K562 (cell line): ENCODE measurements at regions of chr10 and their contacts with region 1.

Region 1: DNA sequence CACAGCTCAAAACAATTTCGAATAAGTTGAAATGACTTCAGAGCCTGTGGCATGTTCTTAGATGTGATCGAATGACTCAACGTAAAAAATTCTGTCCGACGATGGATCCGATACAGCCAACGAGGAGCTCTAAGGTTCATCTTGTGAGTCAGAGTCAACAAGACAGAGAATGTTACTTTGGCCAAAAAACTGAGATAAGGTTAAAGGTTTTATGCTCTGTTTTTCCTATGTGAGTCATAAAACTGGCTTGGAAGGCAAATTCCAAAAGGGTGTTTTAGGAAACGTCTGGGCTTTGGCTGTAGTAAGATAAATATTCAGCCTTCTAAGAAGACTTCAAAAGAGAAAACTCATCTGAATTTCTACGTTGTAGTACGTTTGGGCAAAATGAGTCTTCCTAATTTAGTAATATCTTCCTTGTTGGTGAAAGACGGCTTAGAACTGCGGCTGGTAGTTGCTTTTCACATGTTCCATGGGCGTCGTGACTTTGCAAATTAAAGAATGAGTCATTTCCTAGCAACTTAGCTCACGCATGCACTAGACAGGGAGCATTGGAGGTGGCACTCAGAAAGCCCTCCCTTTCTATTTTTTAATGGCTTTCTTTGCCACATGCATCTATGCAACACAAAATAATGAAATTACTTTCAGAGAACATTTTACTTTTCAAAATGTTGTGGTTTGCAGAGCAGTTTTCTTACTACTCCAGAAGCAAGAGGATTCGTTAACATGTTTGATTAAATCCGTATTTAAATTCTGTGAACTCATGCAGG is 28.2 kb downstream of the PFKP start:
- DNase-seq: peak; percentile 80 to 92 (median 84)
- ATAC-seq: peak; percentile 92
- H3K4me3 ChIP-seq: peak overlapping the region; percentile 24; the same call in 1 of the 2 replicates
- H3K27ac ChIP-seq: peak overlapping the region; percentile 97
- H3K4me1 ChIP-seq: peaks cover 37 to 43% of the 10 kb centered on the region in 2 experiments
- H3K27me3 ChIP-seq: no peaks in the 10 kb centered on the region
- CTCF ChIP-seq: no peak
- EP300 ChIP-seq: peak; percentile 82
- POLR2A ChIP-seq: peak; percentile 67; the same call in 1 of the 2 replicates
- RAD21 ChIP-seq: no peak; a peak in 1 of 4 replicates

Region 2: GRCh38 chr10:3077975-3078921 is 17.3 kb before region 1 on chr10:
- CTCF ChIA-PET with region 1: interaction called, 3 read pairs
- POLR2A ChIA-PET with region 1: interaction called, 12 read pairs
- in situ Hi-C with region 1: no loop called
- intact Hi-C with region 1: no loop called
- DNase-seq: no peak
- ATAC-seq: no peak
- H3K4me3 ChIP-seq: no peak overlapping the region
- H3K27ac ChIP-seq: no peak overlapping the region
- H3K4me1 ChIP-seq: peaks cover 15 to 27% of the 10 kb centered on the region in 2 experiments; a peak in 4 of 5 replicates
- H3K27me3 ChIP-seq: no peaks in the 10 kb centered on the region
- CTCF ChIP-seq: no peak
- EP300 ChIP-seq: no peak
- POLR2A ChIP-seq: no peak
- RAD21 ChIP-seq: no peak

Region 3: DNA sequence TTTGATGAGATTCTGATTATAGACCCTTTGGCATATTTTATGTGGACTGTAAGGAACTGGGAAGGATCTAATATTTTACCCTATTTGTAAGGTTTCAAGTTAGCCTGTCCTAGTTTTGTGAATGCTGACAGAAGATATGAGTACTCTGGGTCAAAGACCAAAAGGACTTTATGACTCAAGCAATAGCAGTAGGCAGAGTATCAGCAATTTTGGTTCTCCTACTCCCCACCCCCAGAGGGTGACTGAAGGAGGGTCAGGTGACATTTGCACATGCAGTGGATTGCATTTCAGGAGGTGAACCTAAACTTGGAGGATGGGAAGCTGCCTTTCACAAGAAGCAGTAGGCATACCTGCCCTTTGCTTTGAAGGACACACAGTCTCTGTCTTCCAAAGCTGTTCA is 773.5 kb after region 1 on chr10:
- CTCF ChIA-PET with region 1: no interaction called
- POLR2A ChIA-PET with region 1: no interaction called
- in situ Hi-C with region 1: no loop called
- intact Hi-C with region 1: no loop called
- DNase-seq: no peak
- ATAC-seq: peak; percentile 32
- H3K4me3 ChIP-seq: no peak overlapping the region
- H3K27ac ChIP-seq: no peak overlapping the region
- H3K4me1 ChIP-seq: peaks cover 3 to 4% of the 10 kb centered on the region in 2 experiments; a peak in 3 of 5 replicates
- H3K27me3 ChIP-seq: no peaks in the 10 kb centered on the region
- CTCF ChIP-seq: no peak
- EP300 ChIP-seq: no peak
- POLR2A ChIP-seq: no peak
- RAD21 ChIP-seq: no peak